ENCODE measurements at regions of chr3 and their contacts with region 1.

Region 1: DNA sequence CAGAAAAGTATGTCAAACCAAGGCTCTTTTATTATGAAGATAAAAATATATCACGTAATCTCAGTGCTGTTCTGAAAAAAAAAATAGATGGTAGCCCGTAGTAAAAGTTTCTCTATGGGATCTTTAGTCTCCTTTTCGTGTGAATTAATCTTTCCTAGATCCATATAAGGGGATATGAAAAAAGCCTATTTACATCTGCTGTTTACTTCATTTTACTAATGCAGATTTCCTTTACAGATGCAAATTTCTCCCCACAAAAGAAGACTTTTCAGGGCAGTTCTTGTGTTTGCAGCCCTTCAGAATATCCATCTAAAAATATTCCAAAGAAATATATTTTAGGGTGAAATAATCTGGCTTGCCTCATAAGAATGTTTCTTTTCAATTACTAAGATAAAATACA is 1291.7 kb downstream of the ROBO1 start:
- DNase-seq: no peak
- ATAC-seq: no peak

Region 2: GRCh38 chr3:77889616-77890015 is 586.5 kb before region 1 on chr3:
- intact Hi-C with region 1: loop called (anchors 5 kb)
- DNase-seq: no peak
- ATAC-seq: no peak